GM12878 (cell line): ENCODE measurements at regions of chr12 and their contacts with region 1.

Region 1: DNA sequence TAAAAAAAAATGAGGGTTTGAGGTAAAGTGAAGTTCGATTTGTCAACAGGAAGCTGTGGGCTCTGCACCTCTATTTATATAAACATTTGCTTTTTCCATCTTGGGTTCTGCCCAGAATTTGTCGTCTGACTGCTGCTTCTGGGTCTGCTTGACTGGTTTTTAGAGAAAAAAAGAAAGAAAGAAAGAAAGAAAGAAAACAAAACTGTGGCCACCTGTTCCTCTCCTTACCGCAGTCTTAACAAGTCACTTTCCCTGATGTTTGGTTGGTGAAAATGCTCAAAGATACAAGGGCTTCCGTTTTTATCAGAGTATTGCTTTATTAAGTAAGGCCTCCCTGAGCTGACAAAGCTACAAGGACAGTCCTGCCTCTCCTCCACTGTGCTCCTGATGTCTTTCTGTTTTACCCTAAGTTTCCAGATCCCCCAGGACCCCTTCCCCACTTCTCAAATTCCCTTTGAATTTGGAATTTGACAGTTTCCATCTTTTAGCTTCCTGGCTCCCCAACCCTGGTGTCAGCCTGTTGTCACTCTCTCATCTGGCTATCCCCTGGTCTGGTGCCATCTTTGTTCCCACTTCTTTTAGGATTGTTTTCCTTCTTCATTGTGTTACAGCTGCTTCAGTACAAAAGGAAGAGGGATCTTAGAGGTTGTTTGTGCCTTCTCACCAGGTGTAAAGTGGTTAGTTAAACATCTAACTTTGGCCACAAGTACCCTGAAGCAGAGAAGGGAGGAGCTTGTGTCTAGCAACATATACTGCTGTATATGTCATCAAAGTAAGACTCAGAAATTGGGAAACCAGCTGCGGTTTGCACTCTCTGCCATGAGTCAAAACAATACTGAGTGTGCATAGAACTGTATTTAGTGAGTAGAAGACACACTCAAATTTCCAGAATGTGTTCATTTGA is 18.0 kb downstream of the MFAP5 start:
- DNase-seq: peak; percentile 90
- ATAC-seq: peak; percentile 84
- H3K4me3 ChIP-seq: peak overlapping the region; percentile 49; the same call in 1 of the 2 replicates
- H3K27ac ChIP-seq: peak overlapping the region; percentile 97
- H3K4me1 ChIP-seq: peaks cover 41% of the 10 kb centered on the region
- H3K27me3 ChIP-seq: no peaks in the 10 kb centered on the region
- CTCF ChIP-seq: no peak
- EP300 ChIP-seq: peak; percentile 92 to 95
- POLR2A ChIP-seq: peak; percentile 59
- RAD21 ChIP-seq: no peak

Region 2: DNA sequence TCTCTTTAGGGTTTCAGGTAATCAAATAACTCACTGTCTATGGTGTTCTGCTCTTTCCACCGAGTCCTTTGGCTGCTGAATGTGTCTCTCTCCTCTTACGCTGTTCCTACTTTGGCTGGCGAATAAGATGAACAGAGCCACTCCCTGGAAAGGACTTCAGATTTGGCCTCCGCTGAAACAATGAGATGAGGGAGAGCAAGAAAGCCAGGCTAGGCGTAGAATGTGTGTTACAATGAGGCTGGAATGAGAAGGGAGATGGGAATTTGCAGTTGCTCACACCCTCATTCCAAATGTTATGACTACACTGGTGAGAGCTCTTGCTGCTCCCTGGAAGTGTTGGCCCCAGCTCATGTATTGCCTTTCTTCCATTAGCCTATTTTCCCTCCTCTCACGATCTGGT is 18.0 kb after region 1 on chr12 and contains the start of gene MFAP5:
- CTCF ChIA-PET with region 1: interaction called, 10 read pairs
- POLR2A ChIA-PET with region 1: interaction called, 5 read pairs
- RAD21 ChIA-PET with region 1: interaction called, 8 read pairs
- SMC1A ChIA-PET with region 1: interaction called, 13 read pairs
- in situ Hi-C with region 1: no loop called
- intact Hi-C with region 1: no loop called
- DNase-seq: no peak
- ATAC-seq: no peak
- H3K4me3 ChIP-seq: no peak within 1 kb of the TSS
- H3K27ac ChIP-seq: no peak within 1 kb of the TSS
- H3K4me1 ChIP-seq: no peaks in the 10 kb centered on the region
- H3K27me3 ChIP-seq: peaks cover 0 to 5% of the 10 kb centered on the region in 2 experiments; a peak in 2 of 4 replicates
- CTCF ChIP-seq: no peak
- EP300 ChIP-seq: no peak
- POLR2A ChIP-seq: no peak
- RAD21 ChIP-seq: no peak
- polyA plus RNA-seq, gene MFAP5: not detected

Region 3: GRCh38 chr12:8675591-8676036 is 31.0 kb after region 1 on chr12:
- CTCF ChIA-PET with region 1: no interaction called
- POLR2A ChIA-PET with region 1: no interaction called
- RAD21 ChIA-PET with region 1: no interaction called
- SMC1A ChIA-PET with region 1: interaction called, 10 read pairs
- in situ Hi-C with region 1: no loop called
- intact Hi-C with region 1: no loop called
- DNase-seq: no peak
- ATAC-seq: peak; percentile 75
- H3K4me3 ChIP-seq: no peak overlapping the region
- H3K27ac ChIP-seq: no peak overlapping the region
- H3K4me1 ChIP-seq: no peaks in the 10 kb centered on the region
- H3K27me3 ChIP-seq: no peaks in the 10 kb centered on the region
- CTCF ChIP-seq: no peak
- EP300 ChIP-seq: peak in 1 of 2 experiments; percentile 65; a peak in 1 of 4 replicates
- POLR2A ChIP-seq: no peak
- RAD21 ChIP-seq: no peak

Region 4: GRCh38 chr12:8687846-8688601 is 43.4 kb after region 1 on chr12:
- CTCF ChIA-PET with region 1: no interaction called
- POLR2A ChIA-PET with region 1: no interaction called
- RAD21 ChIA-PET with region 1: no interaction called
- SMC1A ChIA-PET with region 1: no interaction called
- in situ Hi-C with region 1: no loop called
- intact Hi-C with region 1: no loop called
- DNase-seq: no peak
- ATAC-seq: no peak
- H3K4me3 ChIP-seq: no peak overlapping the region
- H3K27ac ChIP-seq: no peak overlapping the region
- H3K4me1 ChIP-seq: no peaks in the 10 kb centered on the region
- H3K27me3 ChIP-seq: peaks cover 0 to 3% of the 10 kb centered on the region in 2 experiments; a peak in 3 of 4 replicates
- CTCF ChIP-seq: no peak
- EP300 ChIP-seq: no peak
- POLR2A ChIP-seq: no peak
- RAD21 ChIP-seq: no peak

Region 5: DNA sequence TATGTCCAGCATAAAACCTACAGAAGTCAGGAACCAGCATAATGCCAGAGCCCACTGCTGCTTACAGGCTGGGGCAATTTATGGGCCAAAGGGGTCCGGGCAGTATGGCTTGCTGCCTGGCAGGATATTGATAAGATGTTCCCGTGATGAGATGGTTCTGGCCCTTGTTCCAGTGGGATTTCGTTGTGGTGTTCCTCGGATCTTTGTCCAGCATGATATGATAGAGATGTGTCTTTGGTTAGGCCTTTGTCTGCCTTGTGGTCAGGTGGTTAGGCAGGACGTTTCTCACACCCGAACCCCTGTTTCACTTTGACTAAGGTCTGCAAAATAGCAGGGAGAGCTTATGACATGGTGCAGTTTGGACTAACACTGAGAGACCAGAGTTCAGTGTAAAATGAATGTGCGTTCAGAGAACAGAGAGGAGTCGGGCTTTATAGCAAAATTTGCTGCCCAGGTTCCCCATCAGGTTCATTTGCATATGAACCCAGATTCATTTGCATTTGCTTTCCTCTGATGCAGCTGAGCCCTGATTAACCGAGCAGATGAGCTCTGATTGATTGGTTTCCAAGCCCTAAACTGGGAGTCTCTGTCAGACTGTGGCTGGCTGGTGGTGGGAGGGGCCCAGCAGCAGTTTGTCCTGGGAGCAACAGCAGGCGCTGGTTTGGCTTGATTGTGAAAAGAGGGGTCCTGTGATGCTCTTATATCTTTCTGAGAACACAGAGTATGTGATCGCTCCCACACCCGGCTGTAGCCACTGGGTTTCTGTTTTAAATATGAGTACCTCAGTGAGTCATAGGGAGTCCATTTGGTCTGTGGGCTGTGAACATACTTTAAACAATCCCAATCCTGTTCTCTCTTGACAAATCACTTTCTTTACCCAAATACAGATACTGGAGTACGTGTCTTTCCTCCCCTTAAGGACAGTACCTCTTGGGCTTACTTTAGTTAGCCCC is 719.9 kb after region 1 on chr12:
- CTCF ChIA-PET with region 1: no interaction called
- POLR2A ChIA-PET with region 1: no interaction called
- RAD21 ChIA-PET with region 1: no interaction called
- SMC1A ChIA-PET with region 1: no interaction called
- in situ Hi-C with region 1: loop called (anchors 10 kb)
- intact Hi-C with region 1: no loop called
- DNase-seq: peak; percentile 98
- ATAC-seq: peak; percentile 89
- H3K4me3 ChIP-seq: peak overlapping the region; percentile 29; the same call in 1 of the 2 replicates
- H3K27ac ChIP-seq: peak overlapping the region; percentile 88
- H3K4me1 ChIP-seq: peaks cover 42% of the 10 kb centered on the region
- H3K27me3 ChIP-seq: no peaks in the 10 kb centered on the region
- CTCF ChIP-seq: no peak
- EP300 ChIP-seq: peak; percentile 80 to 82
- POLR2A ChIP-seq: peak; percentile 89
- RAD21 ChIP-seq: 0 out of 2 replicates have a peak, but pooled peaks have one; percentile 9